ENCODE measurements at regions of chr12 and their contacts with region 1.

Region 1: GRCh38 chr12:49130151-49131050 is 794 bp downstream of the TUBA1B start:
- DNase-seq: peak; percentile 92
- H3K4me3 Mint-ChIP-seq: peak overlapping the region; percentile 96
- H3K27ac Mint-ChIP-seq: peak overlapping the region; percentile 97
- H3K4me1 Mint-ChIP-seq: peaks cover 54% of the 10 kb centered on the region
- H3K27me3 Mint-ChIP-seq: no peaks in the 10 kb centered on the region

Region 2: DNA sequence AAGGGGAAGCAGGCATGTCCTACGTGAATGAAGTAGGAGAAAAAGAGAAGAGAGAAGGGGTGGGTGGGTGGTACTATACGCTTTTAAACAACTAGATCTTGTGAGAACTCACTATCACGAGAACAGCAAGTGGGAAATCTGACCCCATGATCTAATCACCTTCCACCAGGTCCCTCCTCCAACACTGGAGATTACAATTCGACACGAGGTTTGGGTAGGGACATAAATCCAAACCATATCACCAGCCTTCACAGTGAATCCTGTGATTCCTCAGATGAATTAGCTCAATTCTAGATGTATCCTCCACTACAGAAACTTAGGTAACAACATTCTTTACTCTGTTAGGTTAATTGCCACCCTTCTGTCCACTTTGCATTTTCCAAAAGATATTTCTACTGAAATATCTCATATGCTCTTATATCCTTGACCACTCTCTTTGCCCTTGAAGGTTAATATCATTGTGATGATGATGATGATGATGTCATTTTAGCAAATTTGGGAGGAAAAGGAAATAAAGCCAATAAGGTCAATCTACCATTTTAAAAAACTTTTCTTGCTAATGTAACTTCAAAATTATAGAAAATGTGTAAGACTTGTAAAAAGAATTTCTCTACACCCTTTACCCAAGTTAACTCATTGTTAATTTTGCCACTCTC is 390.7 kb before region 1 on chr12:
- CTCF ChIA-PET with region 1: no interaction called
- POLR2A ChIA-PET with region 1: no interaction called
- DNase-seq: no peak
- H3K4me3 Mint-ChIP-seq: no peak overlapping the region
- H3K27ac Mint-ChIP-seq: no peak overlapping the region
- H3K4me1 Mint-ChIP-seq: no peaks in the 10 kb centered on the region
- H3K27me3 Mint-ChIP-seq: peaks cover 17% of the 10 kb centered on the region

Region 3: DNA sequence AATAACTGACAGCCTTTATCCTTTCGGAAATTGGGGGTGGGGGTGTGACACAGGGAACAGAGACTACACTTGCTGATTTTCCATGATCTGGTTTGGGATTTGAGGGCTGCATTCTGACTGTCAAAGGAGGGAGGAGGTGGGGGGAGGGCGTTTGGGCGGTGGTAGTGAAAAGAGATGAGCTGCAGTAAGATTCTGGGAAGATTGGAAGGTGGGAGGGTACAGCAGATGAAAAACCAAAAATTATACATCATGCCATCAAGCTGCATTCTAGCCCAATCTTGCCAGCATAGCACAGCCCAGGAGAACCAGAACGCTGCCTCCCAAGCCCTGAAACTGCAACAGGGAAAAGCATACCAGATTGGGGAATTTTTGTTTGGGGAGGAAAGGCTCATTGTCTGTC is 267.1 kb before region 1 on chr12:
- CTCF ChIA-PET with region 1: no interaction called
- POLR2A ChIA-PET with region 1: no interaction called
- DNase-seq: no peak
- H3K4me3 Mint-ChIP-seq: no peak overlapping the region
- H3K27ac Mint-ChIP-seq: no peak overlapping the region
- H3K4me1 Mint-ChIP-seq: peaks cover 29% of the 10 kb centered on the region
- H3K27me3 Mint-ChIP-seq: peaks cover 24% of the 10 kb centered on the region

Region 4: GRCh38 chr12:48882315-48882687 is 248.1 kb before region 1 on chr12:
- CTCF ChIA-PET with region 1: no interaction called
- POLR2A ChIA-PET with region 1: no interaction called
- DNase-seq: no peak
- H3K4me3 Mint-ChIP-seq: no peak overlapping the region
- H3K27ac Mint-ChIP-seq: no peak overlapping the region
- H3K4me1 Mint-ChIP-seq: peaks cover 6% of the 10 kb centered on the region
- H3K27me3 Mint-ChIP-seq: peaks cover 36% of the 10 kb centered on the region

Region 5: DNA sequence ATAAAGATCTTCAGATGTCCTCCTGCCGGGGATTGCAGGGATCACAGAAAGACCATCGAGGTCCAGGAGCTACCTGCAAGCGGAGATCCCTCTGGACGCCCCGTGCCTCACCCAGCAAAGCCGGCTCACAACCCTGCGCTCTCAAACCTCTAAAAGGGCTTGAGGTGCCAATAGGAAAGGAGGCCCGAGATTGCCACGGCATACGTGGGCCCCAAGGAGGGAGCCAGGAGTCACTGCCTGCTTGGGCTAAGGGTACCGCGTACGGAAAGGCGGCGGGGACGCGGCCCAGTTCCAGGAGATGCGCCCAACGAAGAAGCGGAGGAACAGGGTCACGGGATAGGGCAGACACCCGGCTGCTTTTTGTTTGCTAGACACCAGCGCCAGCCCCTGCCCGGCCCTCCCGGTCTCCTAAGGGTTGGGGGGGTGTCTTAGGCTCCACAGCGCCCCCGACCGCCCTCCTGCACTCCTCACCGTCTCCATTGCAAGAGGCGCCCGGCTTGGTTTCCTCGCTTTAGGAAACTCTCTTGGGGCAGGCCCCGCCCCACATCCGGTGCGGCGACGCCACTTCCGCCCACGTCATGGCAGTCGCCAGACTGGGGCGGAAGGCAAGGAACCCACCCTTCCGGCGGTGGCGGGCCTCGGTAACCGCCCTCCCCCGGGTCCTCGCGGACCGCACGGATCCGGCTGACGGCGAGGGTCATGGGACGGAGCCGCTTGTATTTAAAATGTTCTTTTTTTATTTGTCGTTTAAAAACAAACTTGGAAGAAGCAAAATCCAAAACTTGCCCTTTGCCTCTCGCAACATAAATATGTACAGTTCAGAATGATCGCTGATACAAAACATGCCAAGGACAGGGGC is 111.9 kb before region 1 on chr12 and contains the start of gene PRKAG1:
- CTCF ChIA-PET with region 1: interaction called, 4 read pairs
- POLR2A ChIA-PET with region 1: interaction called, 24 read pairs
- DNase-seq: peak; percentile 97
- H3K4me3 Mint-ChIP-seq: peak within 1 kb of the TSS; percentile 90
- H3K27ac Mint-ChIP-seq: peak within 1 kb of the TSS; percentile 98
- H3K4me1 Mint-ChIP-seq: peaks cover 46% of the 10 kb centered on the region
- H3K27me3 Mint-ChIP-seq: no peaks in the 10 kb centered on the region
- total RNA-seq, gene PRKAG1: 65.9 to 70.2 TPM

Region 6: GRCh38 chr12:49088190-49088931 is 42.0 kb before region 1 on chr12:
- CTCF ChIA-PET with region 1: interaction called, 33 read pairs
- POLR2A ChIA-PET with region 1: interaction called, 74 read pairs
- DNase-seq: peak; percentile 75
- H3K4me3 Mint-ChIP-seq: peak overlapping the region; percentile 22
- H3K27ac Mint-ChIP-seq: peak overlapping the region; percentile 24
- H3K4me1 Mint-ChIP-seq: peaks cover 64% of the 10 kb centered on the region
- H3K27me3 Mint-ChIP-seq: peaks cover 44% of the 10 kb centered on the region

Region 7: DNA sequence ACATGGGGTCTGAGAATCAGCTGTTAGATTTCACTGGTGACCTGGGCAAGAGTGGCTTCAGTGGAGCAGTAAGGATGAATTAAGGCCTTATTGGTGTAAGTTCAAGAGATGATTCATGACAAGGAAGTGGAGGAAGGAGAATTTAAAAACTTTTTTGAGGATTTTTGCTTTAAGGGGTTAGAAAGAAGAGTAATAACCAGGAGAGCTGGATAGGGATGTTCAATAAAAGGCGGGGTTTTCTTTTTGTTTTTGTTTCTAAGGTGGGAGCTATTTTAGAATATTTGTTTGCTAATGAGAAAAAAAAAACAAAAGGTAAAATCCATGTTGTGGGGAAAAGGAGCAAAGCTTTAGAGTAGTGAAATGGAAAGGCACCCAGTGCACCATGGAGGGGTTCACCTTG is 16.0 kb after region 1 on chr12:
- CTCF ChIA-PET with region 1: interaction called, 5 read pairs
- POLR2A ChIA-PET with region 1: interaction called, 44 read pairs
- DNase-seq: no peak
- H3K4me3 Mint-ChIP-seq: no peak overlapping the region
- H3K27ac Mint-ChIP-seq: no peak overlapping the region
- H3K4me1 Mint-ChIP-seq: peaks cover 4% of the 10 kb centered on the region
- H3K27me3 Mint-ChIP-seq: no peaks in the 10 kb centered on the region

Region 8: DNA sequence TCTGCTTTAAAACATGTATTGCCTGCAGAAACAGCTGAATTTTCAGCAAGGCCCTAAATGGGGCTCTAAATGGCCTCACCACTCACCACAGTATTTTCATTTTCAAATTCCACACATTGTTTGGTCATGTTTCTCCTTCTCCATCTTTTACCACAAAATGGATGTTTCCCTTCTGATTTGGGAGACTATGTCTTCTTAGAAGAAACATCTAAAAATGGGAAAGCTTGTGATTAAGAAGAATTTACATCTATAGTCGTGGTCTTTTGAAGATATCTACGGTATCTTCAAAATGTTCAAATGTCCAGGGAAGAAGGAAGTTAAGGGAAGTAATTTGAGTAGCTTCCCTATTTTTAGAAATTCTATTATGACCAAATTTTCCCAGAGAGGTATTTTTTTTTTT is 113.8 kb after region 1 on chr12:
- CTCF ChIA-PET with region 1: no interaction called
- POLR2A ChIA-PET with region 1: interaction called, 20 read pairs
- DNase-seq: no peak
- H3K4me3 Mint-ChIP-seq: no peak overlapping the region
- H3K27ac Mint-ChIP-seq: no peak overlapping the region
- H3K4me1 Mint-ChIP-seq: no peaks in the 10 kb centered on the region
- H3K27me3 Mint-ChIP-seq: no peaks in the 10 kb centered on the region

Region 9: DNA sequence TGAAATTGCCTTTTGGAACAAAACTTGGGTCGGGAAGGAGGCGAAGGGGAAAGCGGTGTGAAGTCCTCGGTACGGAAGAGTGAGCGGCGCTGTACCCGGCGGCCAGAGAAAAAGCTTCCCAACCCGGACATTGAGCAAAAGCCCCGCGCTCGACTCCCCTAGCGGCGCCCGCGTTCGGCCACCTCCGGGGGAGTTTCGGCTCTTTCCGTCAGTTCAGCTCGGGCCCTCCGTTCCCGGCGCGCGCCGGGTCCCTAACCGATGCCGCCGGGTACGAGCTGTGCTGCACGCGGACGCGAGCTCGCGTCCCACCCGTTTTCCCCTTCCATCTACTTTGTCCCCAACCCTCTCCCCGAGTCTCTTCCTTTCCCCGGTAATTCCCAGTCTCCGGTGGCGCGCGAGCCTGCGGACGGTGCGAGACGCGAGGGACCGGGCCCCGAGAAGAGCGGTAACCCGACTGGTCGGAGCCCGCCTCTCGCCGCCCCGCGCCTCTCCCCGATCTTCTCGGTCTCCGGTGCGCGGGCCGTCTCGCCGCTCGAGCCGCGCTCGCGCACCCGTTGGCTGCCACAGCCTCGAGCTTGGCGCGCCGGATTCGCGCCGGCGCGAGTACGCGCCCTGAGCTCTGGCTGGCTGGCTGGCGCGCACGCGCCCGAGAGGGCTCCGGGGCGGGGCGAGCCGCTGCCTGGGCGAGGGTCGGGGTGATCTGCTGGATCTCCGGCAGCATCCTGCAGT is 236.4 kb after region 1 on chr12:
- CTCF ChIA-PET with region 1: interaction called, 3 read pairs
- POLR2A ChIA-PET with region 1: interaction called, 31 read pairs
- DNase-seq: peak; percentile 91
- H3K4me3 Mint-ChIP-seq: peak overlapping the region; percentile 96
- H3K27ac Mint-ChIP-seq: peak overlapping the region; percentile 93
- H3K4me1 Mint-ChIP-seq: peaks cover 35% of the 10 kb centered on the region
- H3K27me3 Mint-ChIP-seq: peaks cover 2% of the 10 kb centered on the region

Region 10: GRCh38 chr12:49507139-49507538 is 376.7 kb after region 1 on chr12:
- CTCF ChIA-PET with region 1: no interaction called
- POLR2A ChIA-PET with region 1: no interaction called
- DNase-seq: no peak
- H3K4me3 Mint-ChIP-seq: no peak overlapping the region
- H3K27ac Mint-ChIP-seq: no peak overlapping the region
- H3K4me1 Mint-ChIP-seq: no peaks in the 10 kb centered on the region
- H3K27me3 Mint-ChIP-seq: no peaks in the 10 kb centered on the region